IMR-90 (cell line): ENCODE measurements at regions of chr9 and their contacts with region 1.

Region 1: GRCh38 chr9:112074250-112075008 is 100.7 kb downstream of the SUSD1 start:
- DNase-seq: peak; percentile 98
- ATAC-seq: peak; percentile 78
- H3K4me3 ChIP-seq: no peak overlapping the region
- H3K27ac ChIP-seq: peak overlapping the region; percentile 99
- H3K4me1 ChIP-seq: peaks cover 19% of the 10 kb centered on the region
- H3K27me3 ChIP-seq: no peaks in the 10 kb centered on the region
- CTCF ChIP-seq: peak; percentile 98
- POLR2A ChIP-seq: peak; percentile 61
- RAD21 ChIP-seq: peak; percentile 98

Region 2: GRCh38 chr9:111597817-111598729 is 476.4 kb before region 1 on chr9:
- CTCF ChIA-PET with region 1: no interaction called
- POLR2A ChIA-PET with region 1: no interaction called
- dilution Hi-C with region 1: no loop called
- in situ Hi-C with region 1: no loop called
- intact Hi-C with region 1: loop called (anchors 2 kb)
- DNase-seq: peak; percentile 64
- ATAC-seq: peak; percentile 24
- H3K4me3 ChIP-seq: peak overlapping the region; percentile 57
- H3K27ac ChIP-seq: peak overlapping the region; percentile 61
- H3K4me1 ChIP-seq: 0 out of 2 replicates have a peak, but pooled peaks cover 2% of the 10 kb centered on the region
- H3K27me3 ChIP-seq: no peaks in the 10 kb centered on the region
- CTCF ChIP-seq: peak; percentile 75
- POLR2A ChIP-seq: no peak; the same call in 1 of the 2 replicates
- RAD21 ChIP-seq: peak; percentile 78

Region 3: GRCh38 chr9:111691672-111692329 is 382.6 kb before region 1 on chr9:
- CTCF ChIA-PET with region 1: no interaction called
- POLR2A ChIA-PET with region 1: no interaction called
- dilution Hi-C with region 1: no loop called
- in situ Hi-C with region 1: no loop called
- intact Hi-C with region 1: no loop called
- DNase-seq: peak; percentile 48
- ATAC-seq: peak; percentile 75
- H3K4me3 ChIP-seq: no peak overlapping the region
- H3K27ac ChIP-seq: no peak overlapping the region
- H3K4me1 ChIP-seq: 0 out of 2 replicates have a peak, but pooled peaks cover 2% of the 10 kb centered on the region
- H3K27me3 ChIP-seq: no peaks in the 10 kb centered on the region
- CTCF ChIP-seq: peak; percentile 51
- POLR2A ChIP-seq: no peak
- RAD21 ChIP-seq: peak; percentile 47

Region 4: DNA sequence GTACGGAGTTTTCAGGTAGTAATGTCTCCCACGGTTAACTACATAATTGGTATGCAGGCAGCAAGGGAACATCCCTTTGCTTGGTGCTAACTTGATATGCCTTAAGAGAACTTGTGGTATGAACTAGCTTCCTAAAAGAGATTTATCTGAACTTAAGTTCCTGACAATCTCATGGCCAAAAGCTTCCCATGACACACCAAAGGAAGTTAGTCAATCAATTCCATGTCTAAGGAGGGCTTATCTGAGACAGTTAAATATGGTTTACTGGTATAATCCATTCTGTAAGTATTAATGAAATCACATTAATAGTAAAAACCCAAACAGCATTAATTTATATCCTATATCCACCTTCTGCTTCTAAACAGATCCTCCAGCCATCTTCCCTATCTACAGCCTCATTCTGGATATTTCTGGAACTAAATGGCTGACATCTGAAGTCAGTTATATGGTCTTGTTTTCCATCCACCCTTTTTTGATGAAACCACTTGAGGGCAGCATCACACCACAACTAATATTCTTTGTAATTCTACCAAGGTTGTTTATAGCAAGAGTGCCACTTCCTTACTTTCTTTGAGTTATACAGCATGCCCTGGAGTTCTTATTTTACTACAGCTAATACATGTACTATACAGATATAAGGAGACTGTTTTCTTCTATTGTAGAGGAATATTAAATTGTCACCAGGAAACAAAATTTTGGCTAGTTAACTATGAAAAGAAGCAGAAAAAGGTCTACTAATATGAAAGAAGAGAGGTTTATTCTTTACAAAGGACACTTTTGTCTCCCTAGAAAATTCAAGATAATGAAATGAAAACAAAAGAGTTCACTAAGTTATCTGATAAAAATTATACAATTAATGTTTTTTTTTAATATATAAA is 314.4 kb before region 1 on chr9:
- CTCF ChIA-PET with region 1: interaction called, 11 read pairs
- POLR2A ChIA-PET with region 1: no interaction called
- dilution Hi-C with region 1: no loop called
- in situ Hi-C with region 1: loop called (anchors 5 kb)
- intact Hi-C with region 1: loop called (anchors 1 kb)
- DNase-seq: peak; percentile 91
- ATAC-seq: peak; percentile 95
- H3K4me3 ChIP-seq: no peak overlapping the region
- H3K27ac ChIP-seq: peak overlapping the region; percentile 24; the same call in 1 of the 2 replicates
- H3K4me1 ChIP-seq: peaks cover 3% of the 10 kb centered on the region; the same call in 1 of the 2 replicates
- H3K27me3 ChIP-seq: no peaks in the 10 kb centered on the region
- CTCF ChIP-seq: peak; percentile 83
- POLR2A ChIP-seq: no peak
- RAD21 ChIP-seq: peak; percentile 90

Region 5: DNA sequence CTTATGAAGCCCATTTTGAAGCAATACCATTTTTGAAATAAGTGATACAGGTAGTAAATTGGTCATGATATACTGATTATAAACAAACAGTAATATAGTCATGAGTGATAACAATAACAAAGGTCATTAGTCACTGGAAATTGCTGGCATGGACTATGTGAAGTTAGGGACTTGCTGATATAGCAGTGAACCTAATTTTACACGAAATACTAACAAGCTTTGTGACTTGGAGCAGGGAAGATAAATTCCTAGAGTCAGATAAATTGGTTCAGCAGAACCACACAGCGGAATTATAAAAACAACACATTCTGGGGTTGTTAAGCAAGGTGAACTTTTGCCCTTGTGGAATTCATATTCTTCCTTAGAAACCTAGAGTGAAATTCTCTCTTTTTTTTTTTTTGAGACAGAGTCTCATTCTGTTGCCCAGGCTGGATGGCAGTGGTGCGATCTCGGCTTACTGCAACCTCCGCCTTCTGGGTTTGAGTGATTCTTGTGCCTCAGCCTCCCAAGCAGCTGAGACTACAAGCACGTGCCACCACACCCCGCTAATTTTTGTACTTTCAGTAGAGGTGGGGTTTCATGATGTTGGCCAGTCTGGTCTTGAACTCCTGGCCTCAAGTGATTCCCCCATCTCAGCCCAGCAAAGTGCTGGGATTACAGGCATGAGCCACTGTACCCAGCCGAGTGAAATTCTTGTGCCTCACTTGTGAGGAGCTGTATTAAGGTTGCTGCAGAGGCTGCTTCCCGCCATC is 171.9 kb before region 1 on chr9:
- CTCF ChIA-PET with region 1: interaction called, 3 read pairs
- POLR2A ChIA-PET with region 1: interaction called, 10 read pairs
- dilution Hi-C with region 1: no loop called
- in situ Hi-C with region 1: loop called (anchors 5 kb)
- intact Hi-C with region 1: loop called (anchors 1 kb)
- DNase-seq: peak; percentile 70
- ATAC-seq: peak; percentile 10; the same call in 1 of the 2 replicates
- H3K4me3 ChIP-seq: peak overlapping the region; percentile 98; the same call in 1 of the 2 replicates
- H3K27ac ChIP-seq: peak overlapping the region; percentile 55
- H3K4me1 ChIP-seq: peaks cover 29% of the 10 kb centered on the region
- H3K27me3 ChIP-seq: no peaks in the 10 kb centered on the region
- CTCF ChIP-seq: no peak
- POLR2A ChIP-seq: no peak
- RAD21 ChIP-seq: no peak

Region 6: DNA sequence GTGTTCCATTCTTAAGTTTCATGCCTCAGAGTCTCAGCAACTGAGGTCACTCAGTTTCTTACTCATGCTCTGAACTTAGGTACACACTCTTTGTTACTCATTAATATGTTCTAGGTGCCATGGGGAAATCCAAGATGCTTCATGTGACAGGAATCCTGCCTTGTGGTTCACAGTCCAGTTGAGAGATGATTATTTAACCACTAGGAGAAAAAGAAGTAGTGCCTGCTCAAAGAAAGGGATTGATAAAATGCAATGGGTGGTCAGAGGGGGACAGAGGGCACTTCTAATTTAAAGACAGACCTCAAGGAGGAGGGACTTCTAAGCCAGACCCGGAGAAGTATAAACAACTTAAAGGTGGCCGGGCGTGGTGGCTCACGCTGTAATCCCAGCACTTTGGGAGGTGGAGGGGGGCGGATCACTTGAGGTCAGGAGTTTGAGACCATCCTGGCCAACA is 108.8 kb before region 1 on chr9:
- CTCF ChIA-PET with region 1: no interaction called
- POLR2A ChIA-PET with region 1: no interaction called
- dilution Hi-C with region 1: no loop called
- in situ Hi-C with region 1: no loop called
- intact Hi-C with region 1: loop called (anchors 1 kb)
- DNase-seq: peak; percentile 99
- ATAC-seq: peak; percentile 82
- H3K4me3 ChIP-seq: no peak overlapping the region
- H3K27ac ChIP-seq: peak overlapping the region; percentile 48; the same call in 1 of the 2 replicates
- H3K4me1 ChIP-seq: peaks cover 15% of the 10 kb centered on the region; the same call in 1 of the 2 replicates
- H3K27me3 ChIP-seq: no peaks in the 10 kb centered on the region
- CTCF ChIP-seq: peak; percentile 22; the same call in 1 of the 2 replicates
- POLR2A ChIP-seq: no peak
- RAD21 ChIP-seq: peak; percentile 20; the same call in 1 of the 2 replicates

Region 7: DNA sequence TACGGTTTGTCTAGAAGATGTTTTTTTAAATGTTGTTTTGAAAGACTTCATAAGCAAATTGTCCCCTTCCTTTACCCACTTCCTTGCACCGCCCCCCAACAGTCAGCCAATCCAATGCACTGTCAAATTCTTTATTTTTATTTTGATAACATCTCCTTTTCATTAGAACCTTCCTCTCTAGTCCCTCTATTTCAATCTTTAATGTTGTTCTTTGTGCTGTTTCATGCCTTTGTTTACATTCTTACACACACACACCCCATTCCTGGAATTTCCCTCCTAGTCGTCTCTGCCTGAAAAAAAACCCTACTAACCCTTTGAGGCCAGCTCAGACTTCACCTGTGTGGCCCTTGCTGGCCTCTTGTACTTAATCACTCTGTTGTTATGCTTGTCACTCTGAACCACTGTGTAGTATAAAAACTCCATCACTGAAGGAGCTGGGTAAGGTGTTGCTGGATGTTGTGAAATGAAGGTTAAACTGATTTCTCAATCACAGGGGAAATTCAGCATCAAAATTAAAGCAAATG is 44.4 kb before region 1 on chr9:
- CTCF ChIA-PET with region 1: interaction called, 3 read pairs
- POLR2A ChIA-PET with region 1: no interaction called
- dilution Hi-C with region 1: no loop called
- in situ Hi-C with region 1: no loop called
- intact Hi-C with region 1: loop called (anchors 5 kb)
- DNase-seq: peak; percentile 84
- ATAC-seq: peak; percentile 77
- H3K4me3 ChIP-seq: no peak overlapping the region
- H3K27ac ChIP-seq: peak overlapping the region; percentile 43; the same call in 1 of the 2 replicates
- H3K4me1 ChIP-seq: peaks cover 26% of the 10 kb centered on the region
- H3K27me3 ChIP-seq: no peaks in the 10 kb centered on the region
- CTCF ChIP-seq: no peak
- POLR2A ChIP-seq: no peak
- RAD21 ChIP-seq: 0 out of 2 replicates have a peak, but pooled peaks have one; percentile 9

Region 8: GRCh38 chr9:112050544-112051475 is 23.6 kb before region 1 on chr9:
- CTCF ChIA-PET with region 1: interaction called, 4 read pairs
- POLR2A ChIA-PET with region 1: interaction called, 15 read pairs
- dilution Hi-C with region 1: no loop called
- in situ Hi-C with region 1: no loop called
- intact Hi-C with region 1: no loop called
- DNase-seq: peak; percentile 97
- ATAC-seq: peak; percentile 81
- H3K4me3 ChIP-seq: no peak overlapping the region
- H3K27ac ChIP-seq: peak overlapping the region; percentile 96
- H3K4me1 ChIP-seq: peaks cover 22% of the 10 kb centered on the region
- H3K27me3 ChIP-seq: no peaks in the 10 kb centered on the region
- CTCF ChIP-seq: no peak
- POLR2A ChIP-seq: 0 out of 2 replicates have a peak, but pooled peaks have one; percentile 9
- RAD21 ChIP-seq: no peak; the same call in 1 of the 2 replicates